Activated B cell treated with CpG ODN at 0.5 μM for 24 hours (primary cell): ENCODE measurements at regions of chr19 and their contacts with region 1.

Region 1: GRCh38 chr19:46529622-46530462 is 34.2 kb upstream of the PNMA8B start:
- DNase-seq: peak; percentile 63
- ATAC-seq: peak; percentile 72
- H3K4me3 Mint-ChIP-seq: no peak overlapping the region
- H3K27ac Mint-ChIP-seq: no peak overlapping the region
- H3K4me1 Mint-ChIP-seq: peaks cover 10% of the 10 kb centered on the region
- H3K27me3 Mint-ChIP-seq: peaks cover 9% of the 10 kb centered on the region
- CTCF ChIP-seq: peak; percentile 84

Region 2: GRCh38 chr19:46442808-46443450 is 86.9 kb before region 1 on chr19:
- CTCF ChIA-PET with region 1: no interaction called
- POLR2A ChIA-PET with region 1: no interaction called
- intact Hi-C with region 1: no loop called
- DNase-seq: no peak
- ATAC-seq: no peak
- H3K4me3 Mint-ChIP-seq: no peak overlapping the region
- H3K27ac Mint-ChIP-seq: no peak overlapping the region
- H3K4me1 Mint-ChIP-seq: no peaks in the 10 kb centered on the region
- H3K27me3 Mint-ChIP-seq: peaks cover 8% of the 10 kb centered on the region
- CTCF ChIP-seq: no peak

Region 3: GRCh38 chr19:46542428-46543230 is 12.8 kb after region 1 on chr19:
- CTCF ChIA-PET with region 1: interaction called, 15 read pairs
- POLR2A ChIA-PET with region 1: no interaction called
- intact Hi-C with region 1: loop called (anchors 1 kb)
- DNase-seq: peak; percentile 49
- ATAC-seq: peak; percentile 40
- H3K4me3 Mint-ChIP-seq: no peak overlapping the region
- H3K27ac Mint-ChIP-seq: no peak overlapping the region
- H3K4me1 Mint-ChIP-seq: peaks cover 6% of the 10 kb centered on the region
- H3K27me3 Mint-ChIP-seq: peaks cover 5% of the 10 kb centered on the region
- CTCF ChIP-seq: peak; percentile 59

Region 4: DNA sequence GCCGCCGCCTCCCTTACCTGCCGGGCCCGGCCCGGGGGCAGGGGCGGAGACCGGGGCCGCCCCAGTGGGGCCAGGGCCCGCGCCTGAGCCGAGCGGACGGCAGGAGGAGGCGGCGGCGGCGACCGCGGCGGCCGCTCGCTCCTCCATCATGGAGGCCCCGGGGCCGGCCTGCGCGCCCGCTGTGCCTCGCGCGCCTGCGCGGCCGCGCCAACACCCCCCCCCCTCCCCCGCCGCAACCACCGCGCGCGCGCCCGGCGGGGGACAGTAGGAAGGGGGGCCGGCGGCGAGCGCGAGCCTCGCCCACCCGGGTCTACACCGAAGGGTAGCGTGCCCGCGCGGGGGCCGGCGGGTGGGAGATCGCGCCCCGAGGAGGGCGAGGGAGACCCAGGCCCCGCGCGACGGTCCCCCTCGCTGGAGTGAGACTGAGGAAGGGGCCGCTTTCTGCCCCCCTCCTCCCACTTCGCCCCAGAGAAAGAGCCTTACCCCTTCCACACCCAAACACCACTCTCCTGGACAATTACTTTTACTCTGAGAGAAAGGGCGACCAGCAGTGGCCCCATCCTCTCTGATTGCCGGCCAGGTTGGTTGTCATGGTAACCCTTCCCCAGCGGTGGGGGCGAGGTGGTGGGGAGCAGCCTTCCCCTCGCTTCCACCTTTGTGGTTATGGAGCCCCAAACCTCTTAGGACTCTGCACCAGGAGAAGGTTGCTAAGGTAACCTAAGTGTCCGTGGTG is 216.6 kb after region 1 on chr19 and contains the start of gene STRN4:
- CTCF ChIA-PET with region 1: interaction called, 4 read pairs
- POLR2A ChIA-PET with region 1: no interaction called
- intact Hi-C with region 1: loop called (anchors 1 kb)
- DNase-seq: peak; percentile 51
- ATAC-seq: peak; percentile 66
- H3K4me3 Mint-ChIP-seq: peak within 1 kb of the TSS; percentile 94
- H3K27ac Mint-ChIP-seq: peak within 1 kb of the TSS; percentile 83
- H3K4me1 Mint-ChIP-seq: peaks cover 64% of the 10 kb centered on the region
- H3K27me3 Mint-ChIP-seq: no peaks in the 10 kb centered on the region
- CTCF ChIP-seq: no peak
- total RNA-seq, gene STRN4: 83.9 and 90.4 TPM in 2 replicates